Transverse colon (tissue), 4 donors: ENCODE measurements at regions of chr1 and their contacts with region 1.

Region 1: DNA sequence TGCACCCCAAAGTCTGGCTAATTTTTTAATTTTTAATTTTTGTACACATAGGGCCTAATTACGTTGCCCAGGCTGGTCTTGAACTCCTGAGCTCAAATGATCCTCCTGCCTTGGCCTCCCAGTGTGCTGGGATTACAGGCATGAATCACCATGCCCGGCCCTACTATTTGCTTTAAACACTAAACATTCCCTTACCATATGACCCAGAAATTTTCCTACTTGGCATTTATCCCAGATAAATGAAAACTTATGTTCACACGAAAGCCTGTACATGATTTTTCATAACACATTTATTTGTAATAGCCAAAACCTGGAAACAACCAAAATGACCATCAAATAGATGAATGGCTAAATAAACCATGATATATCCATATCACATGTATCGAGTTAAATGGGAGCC is 35.8 kb downstream of the NDUFS5 start:
- DNase-seq: no peak
- H3K4me3 ChIP-seq: no peak overlapping the region
- H3K27ac ChIP-seq: no peak overlapping the region
- H3K4me1 ChIP-seq: peaks cover 0 to 27% (median 6%) of the 10 kb centered on the region in 4 donors
- H3K27me3 ChIP-seq: no peaks in the 10 kb centered on the region
- CTCF ChIP-seq: no peak
- EP300 ChIP-seq: no peak
- POLR2A ChIP-seq: no peak

Region 2: GRCh38 chr1:38891753-38892152 is 170.2 kb before region 1 on chr1:
- in situ Hi-C with region 1: loop called in 1 of 4 experiments (anchors 25 kb)
- intact Hi-C with region 1: no loop called
- DNase-seq: no peak
- H3K4me3 ChIP-seq: no peak overlapping the region
- H3K27ac ChIP-seq: no peak overlapping the region
- H3K4me1 ChIP-seq: no peaks in the 10 kb centered on the region
- H3K27me3 ChIP-seq: no peaks in the 10 kb centered on the region
- CTCF ChIP-seq: no peak
- EP300 ChIP-seq: no peak
- POLR2A ChIP-seq: no peak